ENCODE measurements at regions of chr4 and their contacts with region 1.

Region 1: GRCh38 chr4:159577241-159577640 is 474.4 kb downstream of the RAPGEF2 start:
- DNase-seq: no peak
- H3K4me3 ChIP-seq: no peak overlapping the region
- H3K27ac ChIP-seq: no peak overlapping the region
- H3K4me1 ChIP-seq: no peaks in the 10 kb centered on the region
- H3K27me3 ChIP-seq: no peaks in the 10 kb centered on the region
- CTCF ChIP-seq: no peak
- EP300 ChIP-seq: no peak
- POLR2A ChIP-seq: no peak

Region 2: DNA sequence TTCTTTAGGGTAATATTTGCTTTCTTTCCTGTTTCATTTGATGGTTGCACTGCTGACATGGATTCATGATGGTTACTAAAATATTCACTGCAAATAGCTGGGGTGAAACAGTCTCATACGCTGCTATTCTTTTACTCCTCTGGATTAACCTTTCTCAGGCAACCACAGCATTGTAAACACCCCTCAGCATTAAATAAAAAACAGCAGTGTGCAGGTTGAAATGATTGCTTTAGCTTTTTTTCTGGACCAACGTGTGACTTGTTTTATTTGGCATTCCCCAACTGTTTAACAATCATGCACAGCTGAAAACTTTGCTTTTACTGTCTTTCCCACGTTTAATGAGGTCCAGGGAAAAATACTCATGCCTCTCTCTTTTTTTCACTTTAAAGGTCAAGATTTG is 16.4 kb after region 1 on chr4:
- in situ Hi-C with region 1: no loop called
- intact Hi-C with region 1: loop called (anchors 1 kb)
- DNase-seq: no peak
- H3K4me3 ChIP-seq: no peak overlapping the region
- H3K27ac ChIP-seq: no peak overlapping the region
- H3K4me1 ChIP-seq: no peaks in the 10 kb centered on the region
- H3K27me3 ChIP-seq: no peaks in the 10 kb centered on the region
- CTCF ChIP-seq: no peak
- EP300 ChIP-seq: no peak
- POLR2A ChIP-seq: no peak

Region 3: DNA sequence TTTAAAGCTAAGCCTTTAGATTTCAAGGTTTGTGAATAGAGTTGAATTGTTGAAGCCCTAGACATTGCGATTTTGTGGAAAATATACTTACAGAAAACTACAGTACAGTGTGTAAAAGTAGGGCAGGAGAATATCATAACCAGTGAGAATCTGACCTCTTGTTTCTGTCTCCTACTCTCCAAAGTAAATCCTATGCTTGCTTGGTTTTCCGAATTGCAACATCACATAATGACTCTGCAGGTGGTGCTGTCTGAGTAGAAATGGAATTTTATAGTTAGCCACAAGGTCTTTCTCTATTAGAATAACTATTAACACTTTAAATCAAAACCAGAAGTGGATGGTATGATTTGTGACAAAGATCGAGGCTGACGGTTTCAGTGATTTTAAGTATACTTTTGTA is 31.2 kb after region 1 on chr4:
- in situ Hi-C with region 1: no loop called
- intact Hi-C with region 1: no loop called
- DNase-seq: no peak
- H3K4me3 ChIP-seq: no peak overlapping the region
- H3K27ac ChIP-seq: no peak overlapping the region
- H3K4me1 ChIP-seq: no peaks in the 10 kb centered on the region
- H3K27me3 ChIP-seq: no peaks in the 10 kb centered on the region
- CTCF ChIP-seq: no peak
- EP300 ChIP-seq: no peak
- POLR2A ChIP-seq: no peak